T-cell (primary cell): ENCODE measurements at regions of chr13 and their contacts with region 1.

Region 1: GRCh38 chr13:95660981-95661581 is 15.9 kb upstream of the DNAJC3 start:
- DNase-seq: peak in 1 of 35 experiments; percentile 50
- ATAC-seq: no peak
- H3K4me3 ChIP-seq: no peak overlapping the region
- H3K4me3 Mint-ChIP-seq: no peak overlapping the region
- H3K27ac ChIP-seq: no peak overlapping the region
- H3K27ac Mint-ChIP-seq: no peak overlapping the region
- H3K4me1 ChIP-seq: no peaks in the 10 kb centered on the region
- H3K4me1 Mint-ChIP-seq: no peaks in the 10 kb centered on the region
- H3K27me3 ChIP-seq: peaks cover 0 to 6% of the 10 kb centered on the region in 2 experiments
- H3K27me3 Mint-ChIP-seq: peaks cover 18 to 22% of the 10 kb centered on the region in 2 donors

Region 2: DNA sequence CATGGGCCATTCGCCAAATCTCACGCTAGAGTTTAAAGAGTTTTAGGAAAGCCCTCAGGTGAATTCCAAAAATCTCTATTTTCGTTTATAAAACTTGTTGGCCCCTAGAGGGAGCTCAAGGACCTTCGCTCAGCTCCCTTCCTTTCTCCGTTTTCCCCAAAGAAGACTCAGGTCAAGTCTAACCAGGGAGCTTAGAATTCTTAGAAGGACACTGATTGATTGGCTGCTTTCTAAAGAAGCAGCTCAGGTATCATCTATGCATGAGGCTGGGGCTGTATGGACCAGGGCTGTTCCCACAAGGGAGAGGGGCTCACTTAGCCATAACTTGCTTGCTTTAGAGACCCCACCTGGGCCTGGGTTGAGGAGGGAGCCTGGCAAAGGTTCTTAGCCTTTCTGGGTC is 37.1 kb before region 1 on chr13:
- CTCF ChIA-PET with region 1: interaction called, 8 to 15 read pairs
- POLR2A ChIA-PET with region 1: no interaction called
- DNase-seq: peak in 5 of 35 experiments; percentile 0 to 67 (median 5)
- ATAC-seq: no peak
- H3K4me3 ChIP-seq: no peak overlapping the region
- H3K4me3 Mint-ChIP-seq: no peak overlapping the region
- H3K27ac ChIP-seq: no peak overlapping the region
- H3K27ac Mint-ChIP-seq: no peak overlapping the region
- H3K4me1 ChIP-seq: no peaks in the 10 kb centered on the region
- H3K4me1 Mint-ChIP-seq: no peaks in the 10 kb centered on the region
- H3K27me3 ChIP-seq: peaks cover 0 to 7% of the 10 kb centered on the region in 2 experiments
- H3K27me3 Mint-ChIP-seq: peaks cover 4 to 12% of the 10 kb centered on the region in 2 donors

Region 3: GRCh38 chr13:96671073-96671472 is 1010.0 kb after region 1 on chr13:
- CTCF ChIA-PET with region 1: no interaction called
- POLR2A ChIA-PET with region 1: no interaction called
- DNase-seq: no peak
- ATAC-seq: no peak
- H3K4me3 ChIP-seq: no peak overlapping the region
- H3K4me3 Mint-ChIP-seq: no peak overlapping the region
- H3K27ac ChIP-seq: no peak overlapping the region
- H3K27ac Mint-ChIP-seq: no peak overlapping the region
- H3K4me1 ChIP-seq: no peaks in the 10 kb centered on the region
- H3K4me1 Mint-ChIP-seq: no peaks in the 10 kb centered on the region
- H3K27me3 ChIP-seq: no peaks in the 10 kb centered on the region
- H3K27me3 Mint-ChIP-seq: no peaks in the 10 kb centered on the region